ENCODE measurements at regions of chr12 and their contacts with region 1.

Region 1: GRCh38 chr12:64551698-64552097 is 58.6 kb upstream of the RASSF3 start:
- DNase-seq: no peak
- ATAC-seq: no peak
- H3K4me3 ChIP-seq: no peak overlapping the region
- H3K27ac ChIP-seq: no peak overlapping the region
- H3K4me1 ChIP-seq: no peaks in the 10 kb centered on the region; the same call in 1 of the 2 replicates
- H3K27me3 ChIP-seq: no peaks in the 10 kb centered on the region; a peak in 1 of 4 replicates
- CTCF ChIP-seq: no peak
- EP300 ChIP-seq: no peak
- POLR2A ChIP-seq: no peak
- RAD21 ChIP-seq: no peak

Region 2: DNA sequence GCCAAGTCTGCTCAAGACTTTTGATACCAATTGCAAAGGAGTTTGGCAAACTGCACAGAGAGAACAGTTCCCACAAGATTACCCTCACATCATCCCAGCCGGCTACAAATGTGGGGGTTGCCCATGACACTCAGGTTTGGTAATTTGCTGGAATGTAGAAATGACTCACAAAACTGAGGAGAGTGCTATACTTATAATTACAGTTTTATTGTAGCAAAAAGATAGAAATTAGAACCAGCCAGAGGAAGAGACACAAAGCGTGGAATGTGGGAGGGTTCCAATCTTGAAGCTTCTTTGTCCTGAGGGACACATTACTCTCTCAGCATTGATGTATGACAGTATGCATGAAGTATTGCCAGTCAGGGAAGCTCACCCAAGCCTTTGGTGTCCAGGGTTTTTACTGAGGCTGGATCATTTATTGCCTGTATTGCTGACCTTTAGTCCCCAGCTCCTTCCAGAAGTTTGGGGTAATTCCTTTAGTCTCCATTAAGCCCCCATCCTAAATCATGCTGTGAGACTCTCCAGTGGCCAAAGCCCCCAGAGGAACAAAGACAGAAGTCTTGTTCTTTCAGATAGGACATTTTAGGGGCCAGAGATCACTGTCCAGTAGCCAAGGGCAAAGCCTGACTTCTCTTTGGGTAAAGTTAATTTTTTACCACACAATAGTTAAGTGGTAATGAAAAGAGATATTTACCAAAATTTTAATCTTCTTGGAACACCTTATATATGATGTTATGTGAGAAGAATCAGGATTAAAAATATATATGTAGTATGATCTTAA is 89.9 kb before region 1 on chr12:
- CTCF ChIA-PET with region 1: no interaction called
- POLR2A ChIA-PET with region 1: no interaction called
- RAD21 ChIA-PET with region 1: no interaction called
- SMC1A ChIA-PET with region 1: no interaction called
- in situ Hi-C with region 1: no loop called
- intact Hi-C with region 1: no loop called
- DNase-seq: no peak
- ATAC-seq: no peak
- H3K4me3 ChIP-seq: no peak overlapping the region
- H3K27ac ChIP-seq: no peak overlapping the region
- H3K4me1 ChIP-seq: peaks cover 12% of the 10 kb centered on the region
- H3K27me3 ChIP-seq: no peaks in the 10 kb centered on the region
- CTCF ChIP-seq: no peak
- EP300 ChIP-seq: no peak
- POLR2A ChIP-seq: no peak
- RAD21 ChIP-seq: no peak

Region 3: GRCh38 chr12:64531665-64532335 is 19.9 kb before region 1 on chr12:
- CTCF ChIA-PET with region 1: interaction called, 8 read pairs
- POLR2A ChIA-PET with region 1: interaction called, 4 read pairs
- RAD21 ChIA-PET with region 1: interaction called, 4 read pairs
- SMC1A ChIA-PET with region 1: interaction called, 14 read pairs
- in situ Hi-C with region 1: no loop called
- intact Hi-C with region 1: no loop called
- DNase-seq: no peak
- ATAC-seq: peak; percentile 37; the same call in 2 of the 3 replicates
- H3K4me3 ChIP-seq: no peak overlapping the region
- H3K27ac ChIP-seq: no peak overlapping the region
- H3K4me1 ChIP-seq: no peaks in the 10 kb centered on the region
- H3K27me3 ChIP-seq: no peaks in the 10 kb centered on the region
- CTCF ChIP-seq: no peak
- EP300 ChIP-seq: no peak
- POLR2A ChIP-seq: no peak
- RAD21 ChIP-seq: no peak

Region 4: DNA sequence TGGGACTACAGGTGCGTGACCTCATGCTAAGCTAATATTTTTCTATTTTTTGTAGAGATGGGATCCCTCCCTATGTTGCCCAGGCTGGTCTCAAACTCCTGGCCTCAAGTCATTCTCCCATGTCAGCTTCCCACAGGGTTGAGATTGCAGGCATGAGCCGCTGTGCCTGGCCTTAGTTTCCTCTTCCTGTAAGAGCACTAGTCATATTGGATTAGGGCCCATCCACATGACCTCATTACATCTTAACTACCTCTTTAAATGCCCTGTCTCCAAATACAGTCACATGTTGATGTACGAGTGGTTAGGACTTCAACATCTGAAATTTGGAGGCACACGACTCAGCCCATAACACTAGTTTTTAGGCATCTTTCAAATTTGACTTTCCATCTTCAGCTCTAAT is 13.6 kb before region 1 on chr12:
- CTCF ChIA-PET with region 1: interaction called, 11 read pairs
- POLR2A ChIA-PET with region 1: interaction called, 4 read pairs
- RAD21 ChIA-PET with region 1: interaction called, 4 read pairs
- SMC1A ChIA-PET with region 1: interaction called, 14 read pairs
- in situ Hi-C with region 1: no loop called
- intact Hi-C with region 1: no loop called
- DNase-seq: no peak
- ATAC-seq: no peak
- H3K4me3 ChIP-seq: no peak overlapping the region
- H3K27ac ChIP-seq: no peak overlapping the region
- H3K4me1 ChIP-seq: no peaks in the 10 kb centered on the region
- H3K27me3 ChIP-seq: no peaks in the 10 kb centered on the region
- CTCF ChIP-seq: no peak
- EP300 ChIP-seq: no peak
- POLR2A ChIP-seq: no peak
- RAD21 ChIP-seq: no peak

Region 5: GRCh38 chr12:64571411-64571810 is 19.7 kb after region 1 on chr12:
- CTCF ChIA-PET with region 1: interaction called, 12 read pairs
- POLR2A ChIA-PET with region 1: no interaction called
- RAD21 ChIA-PET with region 1: no interaction called
- SMC1A ChIA-PET with region 1: interaction called, 6 read pairs
- in situ Hi-C with region 1: no loop called
- intact Hi-C with region 1: no loop called
- DNase-seq: no peak
- ATAC-seq: no peak
- H3K4me3 ChIP-seq: no peak overlapping the region
- H3K27ac ChIP-seq: no peak overlapping the region
- H3K4me1 ChIP-seq: no peaks in the 10 kb centered on the region
- H3K27me3 ChIP-seq: no peaks in the 10 kb centered on the region
- CTCF ChIP-seq: no peak
- EP300 ChIP-seq: no peak
- POLR2A ChIP-seq: no peak
- RAD21 ChIP-seq: no peak

Region 6: GRCh38 chr12:64688715-64689114 is 137.0 kb after region 1 on chr12:
- CTCF ChIA-PET with region 1: interaction called, 175 read pairs
- POLR2A ChIA-PET with region 1: no interaction called
- RAD21 ChIA-PET with region 1: interaction called, 103 read pairs
- SMC1A ChIA-PET with region 1: interaction called, 139 read pairs
- in situ Hi-C with region 1: no loop called
- intact Hi-C with region 1: no loop called
- DNase-seq: no peak
- ATAC-seq: no peak
- H3K4me3 ChIP-seq: no peak overlapping the region
- H3K27ac ChIP-seq: no peak overlapping the region
- H3K4me1 ChIP-seq: no peaks in the 10 kb centered on the region
- H3K27me3 ChIP-seq: no peaks in the 10 kb centered on the region
- CTCF ChIP-seq: no peak
- EP300 ChIP-seq: no peak
- POLR2A ChIP-seq: no peak
- RAD21 ChIP-seq: no peak

Region 7: DNA sequence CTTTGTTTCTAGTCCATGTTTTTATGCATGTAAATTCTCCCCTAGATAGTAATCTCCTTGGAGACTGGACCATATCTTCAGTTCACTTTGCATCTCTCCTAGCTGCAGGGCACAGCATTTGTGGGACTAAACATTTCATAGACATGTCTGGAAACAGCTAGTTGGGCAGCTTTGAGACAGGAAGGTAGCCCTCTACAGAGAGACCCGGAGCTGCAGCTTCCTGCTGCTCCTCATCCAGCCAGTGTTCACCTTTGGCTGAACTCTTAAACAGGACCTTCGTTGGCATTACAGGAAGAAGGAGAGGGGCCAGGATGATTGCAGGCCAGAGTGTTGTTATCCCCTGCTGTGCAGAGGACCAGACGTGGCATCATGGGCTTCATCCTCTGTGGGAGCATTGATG is 154.6 kb after region 1 on chr12:
- CTCF ChIA-PET with region 1: interaction called, 45 read pairs
- POLR2A ChIA-PET with region 1: no interaction called
- RAD21 ChIA-PET with region 1: interaction called, 4 read pairs
- SMC1A ChIA-PET with region 1: interaction called, 14 read pairs
- in situ Hi-C with region 1: loop called (anchors 5 kb)
- intact Hi-C with region 1: no loop called
- DNase-seq: no peak
- ATAC-seq: no peak
- H3K4me3 ChIP-seq: no peak overlapping the region
- H3K27ac ChIP-seq: no peak overlapping the region
- H3K4me1 ChIP-seq: no peaks in the 10 kb centered on the region
- H3K27me3 ChIP-seq: no peaks in the 10 kb centered on the region
- CTCF ChIP-seq: no peak
- EP300 ChIP-seq: no peak
- POLR2A ChIP-seq: no peak
- RAD21 ChIP-seq: no peak

Measured in GM12878 (cell line).